Endothelial cell of umbilical vein (primary cell): ENCODE measurements at regions of chr10 and their contacts with region 1.

Region 1: GRCh38 chr10:91908337-91909116 is 759 bp downstream of the FGFBP3 start:
- DNase-seq: peak; percentile 81
- H3K4me3 ChIP-seq: peak overlapping the region; percentile 57 to 71 (median 63)
- H3K27ac ChIP-seq: no peak overlapping the region
- H3K4me1 ChIP-seq: peaks cover 18% of the 10 kb centered on the region
- H3K27me3 ChIP-seq: peaks cover 3% of the 10 kb centered on the region in 2 experiments
- CTCF ChIP-seq: peak; percentile 37 to 51
- POLR2A ChIP-seq: no peak

Region 2: GRCh38 chr10:91389636-91390512 is 518.7 kb before region 1 on chr10:
- CTCF ChIA-PET with region 1: interaction called, 5 read pairs
- POLR2A ChIA-PET with region 1: no interaction called
- dilution Hi-C with region 1: no loop called
- intact Hi-C with region 1: loop called (anchors 2 kb)
- DNase-seq: peak; percentile 64
- H3K4me3 ChIP-seq: peak overlapping the region in 1 of 3 experiments; percentile 27
- H3K27ac ChIP-seq: no peak overlapping the region
- H3K4me1 ChIP-seq: peaks cover 5% of the 10 kb centered on the region
- H3K27me3 ChIP-seq: peaks cover 14 to 31% of the 10 kb centered on the region in 2 experiments
- CTCF ChIP-seq: peak; percentile 27 to 28
- POLR2A ChIP-seq: no peak

Region 3: DNA sequence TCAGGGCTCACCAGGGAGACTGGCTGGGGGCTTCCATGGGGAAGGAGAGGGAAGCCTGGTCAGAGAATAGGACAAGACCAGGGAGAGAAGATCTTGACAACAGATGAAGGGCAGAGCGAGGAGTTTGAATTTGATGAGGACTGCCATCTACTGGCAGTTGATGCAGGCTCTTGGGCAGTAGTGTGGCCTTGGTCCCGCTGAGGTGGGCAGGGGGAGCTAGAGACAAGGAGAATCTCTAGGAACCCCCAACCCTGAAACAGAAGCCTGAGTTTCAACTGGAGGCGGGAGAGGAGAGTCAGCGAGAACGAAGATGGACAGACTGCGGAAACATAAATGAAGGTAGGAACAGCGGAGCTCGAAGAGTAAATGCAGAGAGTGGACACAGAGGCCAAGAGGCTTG is 356.7 kb before region 1 on chr10:
- CTCF ChIA-PET with region 1: interaction called, 8 read pairs
- POLR2A ChIA-PET with region 1: no interaction called
- dilution Hi-C with region 1: no loop called
- intact Hi-C with region 1: loop called (anchors 5 kb)
- DNase-seq: peak; percentile 78
- H3K4me3 ChIP-seq: no peak overlapping the region
- H3K27ac ChIP-seq: no peak overlapping the region
- H3K4me1 ChIP-seq: no peaks in the 10 kb centered on the region
- H3K27me3 ChIP-seq: peaks cover 0 to 1% of the 10 kb centered on the region in 2 experiments
- CTCF ChIP-seq: peak; percentile 68 to 87
- POLR2A ChIP-seq: no peak

Region 4: DNA sequence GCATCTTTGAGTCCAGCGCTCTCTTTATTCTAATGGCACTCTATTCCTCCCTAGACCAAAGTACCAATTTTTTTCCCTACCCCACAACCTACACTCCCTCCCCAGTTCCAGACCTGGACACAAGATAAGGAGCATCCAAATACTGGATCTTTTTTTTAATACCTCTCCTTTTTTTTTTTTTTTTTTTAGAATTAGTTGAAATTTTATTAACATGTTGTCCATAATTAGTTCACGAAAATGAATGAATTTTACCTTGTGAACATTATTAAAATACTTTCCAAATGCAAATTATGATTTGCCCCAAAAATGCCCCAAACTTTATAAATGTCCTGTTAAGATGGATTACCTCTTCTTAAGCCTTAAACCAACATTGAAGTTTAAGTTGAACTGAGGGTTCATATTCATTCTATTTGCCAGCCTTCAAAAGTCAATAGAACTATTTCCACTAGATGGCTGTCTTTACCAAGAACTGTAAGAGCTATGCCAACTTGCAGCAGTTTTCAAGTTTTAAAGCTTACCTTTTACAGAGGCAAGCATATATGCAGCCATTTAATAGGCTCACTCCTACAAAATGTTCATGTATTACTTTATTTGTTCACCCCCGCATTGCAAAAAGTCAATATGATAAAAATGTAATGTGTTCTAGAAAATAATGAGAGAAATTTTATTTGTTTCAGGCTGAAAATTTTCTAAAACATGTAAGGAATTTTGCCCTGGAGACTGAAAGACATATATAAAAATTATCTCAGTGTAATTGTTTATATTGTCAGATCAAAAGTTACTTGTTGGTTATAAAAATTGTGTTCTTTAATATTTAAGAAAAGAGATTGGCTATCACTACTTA is 150.0 kb before region 1 on chr10:
- CTCF ChIA-PET with region 1: interaction called, 75 read pairs
- POLR2A ChIA-PET with region 1: no interaction called
- dilution Hi-C with region 1: no loop called
- intact Hi-C with region 1: loop called (anchors 1 kb)
- DNase-seq: peak; percentile 64
- H3K4me3 ChIP-seq: no peak overlapping the region
- H3K27ac ChIP-seq: no peak overlapping the region
- H3K4me1 ChIP-seq: no peaks in the 10 kb centered on the region
- H3K27me3 ChIP-seq: peaks cover 7 to 35% of the 10 kb centered on the region in 2 experiments
- CTCF ChIP-seq: peak; percentile 19 to 33
- POLR2A ChIP-seq: no peak

Region 5: GRCh38 chr10:91856637-91857036 is 51.9 kb before region 1 on chr10:
- CTCF ChIA-PET with region 1: interaction called, 31 read pairs
- POLR2A ChIA-PET with region 1: no interaction called
- dilution Hi-C with region 1: no loop called
- intact Hi-C with region 1: loop called (anchors 1 kb)
- DNase-seq: peak; percentile 37
- H3K4me3 ChIP-seq: no peak overlapping the region
- H3K27ac ChIP-seq: no peak overlapping the region
- H3K4me1 ChIP-seq: no peaks in the 10 kb centered on the region
- H3K27me3 ChIP-seq: no peaks in the 10 kb centered on the region
- CTCF ChIP-seq: peak; percentile 21 to 46
- POLR2A ChIP-seq: no peak

Region 6: GRCh38 chr10:91880312-91880711 is 28.2 kb before region 1 on chr10:
- CTCF ChIA-PET with region 1: interaction called, 11 read pairs
- POLR2A ChIA-PET with region 1: no interaction called
- dilution Hi-C with region 1: no loop called
- intact Hi-C with region 1: no loop called
- DNase-seq: no peak
- H3K4me3 ChIP-seq: no peak overlapping the region
- H3K27ac ChIP-seq: no peak overlapping the region
- H3K4me1 ChIP-seq: no peaks in the 10 kb centered on the region
- H3K27me3 ChIP-seq: no peaks in the 10 kb centered on the region
- CTCF ChIP-seq: no peak
- POLR2A ChIP-seq: no peak

Region 7: DNA sequence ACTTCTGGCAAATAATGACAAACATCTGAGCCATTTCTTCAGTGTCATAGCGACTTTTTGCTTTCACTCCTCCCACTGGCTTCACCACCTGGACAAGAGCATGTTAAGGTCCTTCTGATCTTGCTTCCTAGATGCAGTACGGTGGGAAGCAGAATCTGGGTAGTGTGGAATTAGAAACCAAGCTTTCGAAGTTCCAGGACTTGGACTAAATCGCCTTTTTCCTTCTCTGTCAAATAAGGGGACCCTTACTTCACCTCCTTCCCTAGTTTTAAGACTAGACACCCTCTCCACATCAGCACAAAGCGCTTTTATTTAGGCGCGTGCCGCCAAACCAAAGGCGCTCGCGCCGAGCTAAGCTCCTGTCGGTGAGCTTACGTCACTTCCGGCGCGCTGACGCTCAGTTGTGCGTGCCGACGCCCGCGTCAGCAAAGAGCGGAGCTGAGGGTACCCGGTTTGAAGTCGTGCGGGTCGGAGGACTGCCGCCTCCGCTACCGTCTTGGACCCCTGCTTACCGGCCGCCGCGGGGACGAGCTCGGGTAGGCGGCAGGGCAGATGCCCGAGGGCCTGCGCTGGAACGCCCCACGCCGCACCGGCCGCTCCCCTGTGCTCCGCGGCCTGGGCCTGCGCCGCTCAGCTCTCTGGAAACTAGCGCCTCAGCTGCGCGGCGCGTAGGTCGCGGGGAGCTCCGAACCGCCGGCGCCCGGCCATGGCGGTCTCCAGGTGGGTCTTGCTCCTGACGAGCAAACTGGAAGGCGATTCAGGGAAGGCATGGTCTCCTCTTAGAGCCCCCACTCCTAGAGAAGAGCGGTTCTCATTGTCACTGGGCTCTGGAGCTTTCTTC is 15.1 kb after region 1 on chr10 and contains the start of gene BTAF1:
- CTCF ChIA-PET with region 1: interaction called, 28 read pairs
- POLR2A ChIA-PET with region 1: interaction called, 6 read pairs
- dilution Hi-C with region 1: no loop called
- intact Hi-C with region 1: no loop called
- DNase-seq: peak; percentile 95
- H3K4me3 ChIP-seq: peak within 1 kb of the TSS; percentile 87 to 99 (median 87)
- H3K27ac ChIP-seq: peak within 1 kb of the TSS; percentile 66
- H3K4me1 ChIP-seq: peaks cover 12% of the 10 kb centered on the region
- H3K27me3 ChIP-seq: no peaks in the 10 kb centered on the region
- CTCF ChIP-seq: no peak
- POLR2A ChIP-seq: peak; percentile 96
- total RNA-seq, gene BTAF1: 21.3 and 23.1 TPM in 2 replicates

Region 8: DNA sequence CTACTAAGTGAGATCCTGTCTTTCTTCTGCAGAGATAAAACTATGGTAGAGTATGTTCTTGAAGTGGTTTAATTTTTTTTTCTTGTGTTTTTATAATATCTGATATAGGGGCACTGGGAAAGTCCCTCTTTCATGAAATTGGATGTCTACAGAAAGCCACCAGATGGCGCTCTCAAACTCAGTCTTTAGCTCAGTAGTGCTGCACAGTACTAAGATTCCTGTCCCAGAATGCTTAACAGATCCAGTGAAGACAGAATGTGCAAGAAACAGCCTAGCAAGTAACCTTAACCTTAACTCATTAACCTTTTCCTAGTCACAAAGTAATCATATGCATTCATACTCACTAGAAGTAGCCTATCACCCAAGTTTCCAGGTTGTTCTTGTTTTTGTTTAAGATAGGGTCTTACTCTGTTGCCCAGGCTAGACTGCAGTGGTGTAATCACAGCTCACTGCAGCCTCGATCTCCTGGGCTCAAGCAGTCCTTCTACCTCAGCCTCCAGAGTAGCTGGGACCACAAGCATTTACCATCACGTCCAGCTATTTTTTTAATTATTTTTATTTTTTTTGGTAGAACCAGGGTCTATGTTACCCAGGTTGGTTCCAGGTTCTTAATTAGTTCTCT is 608.6 kb after region 1 on chr10:
- CTCF ChIA-PET with region 1: no interaction called
- POLR2A ChIA-PET with region 1: no interaction called
- dilution Hi-C with region 1: no loop called
- intact Hi-C with region 1: no loop called
- DNase-seq: peak; percentile 80
- H3K4me3 ChIP-seq: no peak overlapping the region
- H3K27ac ChIP-seq: no peak overlapping the region
- H3K4me1 ChIP-seq: no peaks in the 10 kb centered on the region
- H3K27me3 ChIP-seq: no peaks in the 10 kb centered on the region
- CTCF ChIP-seq: peak; percentile 67 to 73
- POLR2A ChIP-seq: no peak